ENCODE measurements at regions of chr2 and their contacts with region 1.

Region 1: GRCh38 chr2:215557701-215558100 is 121.8 kb upstream of the FN1 start:
- DNase-seq: no peak
- ATAC-seq: no peak
- H3K4me3 ChIP-seq: no peak overlapping the region
- H3K27ac ChIP-seq: no peak overlapping the region
- H3K4me1 ChIP-seq: peaks cover 13% of the 10 kb centered on the region; the same call in 1 of the 2 replicates
- H3K27me3 ChIP-seq: no peaks in the 10 kb centered on the region
- CTCF ChIP-seq: no peak
- POLR2A ChIP-seq: no peak
- RAD21 ChIP-seq: no peak

Region 2: GRCh38 chr2:215577356-215577755 is 19.7 kb after region 1 on chr2:
- CTCF ChIA-PET with region 1: no interaction called
- POLR2A ChIA-PET with region 1: no interaction called
- dilution Hi-C with region 1: no loop called
- in situ Hi-C with region 1: no loop called
- intact Hi-C with region 1: loop called (anchors 1 kb)
- DNase-seq: peak; percentile 79
- ATAC-seq: peak; percentile 60; the same call in 1 of the 2 replicates
- H3K4me3 ChIP-seq: no peak overlapping the region
- H3K27ac ChIP-seq: no peak overlapping the region
- H3K4me1 ChIP-seq: peaks cover 3% of the 10 kb centered on the region
- H3K27me3 ChIP-seq: no peaks in the 10 kb centered on the region
- CTCF ChIP-seq: no peak
- POLR2A ChIP-seq: no peak
- RAD21 ChIP-seq: no peak

Region 3: DNA sequence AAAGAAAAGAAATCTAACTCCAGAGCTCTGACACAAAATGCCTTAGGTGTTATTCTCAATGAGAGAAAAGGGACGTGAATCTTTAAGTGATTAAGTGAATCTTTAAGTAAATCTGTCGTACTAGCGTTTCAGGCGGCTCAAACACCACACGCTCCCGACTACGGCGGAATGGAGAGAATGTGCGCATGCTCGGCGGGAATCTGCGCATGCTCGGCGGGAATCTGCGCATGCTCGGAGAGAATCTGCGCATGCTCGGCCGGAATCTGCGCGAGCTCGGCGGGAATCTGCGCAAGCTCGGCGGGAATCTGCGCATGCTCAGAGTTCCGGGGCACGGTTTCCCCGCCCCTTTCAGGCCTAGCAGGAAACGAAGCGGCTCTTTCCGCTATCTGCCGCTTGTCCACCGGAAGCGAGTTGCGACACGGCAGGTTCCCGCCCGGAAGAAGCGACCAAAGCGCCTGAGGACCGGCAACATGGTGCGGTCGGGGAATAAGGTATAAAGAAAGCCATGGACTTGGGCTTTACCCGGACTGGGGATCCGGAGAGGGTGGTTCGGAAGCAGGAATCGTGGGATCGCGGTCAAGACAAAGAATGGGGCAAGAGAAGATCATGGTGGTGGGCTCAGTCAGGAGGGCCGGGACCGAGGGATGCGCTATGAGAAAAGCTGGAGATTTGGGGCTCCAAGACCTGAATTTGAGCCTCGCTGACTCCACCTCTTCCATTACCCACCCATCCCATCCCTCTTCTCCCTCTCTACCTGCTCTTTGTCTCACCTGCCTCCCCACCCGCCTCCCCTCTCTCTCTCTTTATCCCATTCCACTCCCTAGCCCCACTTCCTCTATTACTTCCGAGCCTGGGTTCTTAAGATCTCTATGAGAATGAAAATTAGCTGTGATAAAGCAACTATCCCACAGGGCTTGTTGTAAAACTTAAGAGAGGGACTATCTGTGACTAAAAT is 551.5 kb after region 1 on chr2 and contains the start of gene XRCC5:
- CTCF ChIA-PET with region 1: no interaction called
- POLR2A ChIA-PET with region 1: no interaction called
- dilution Hi-C with region 1: no loop called
- in situ Hi-C with region 1: no loop called
- intact Hi-C with region 1: no loop called
- DNase-seq: peak; percentile 96
- ATAC-seq: peak; percentile 86
- H3K4me3 ChIP-seq: peak within 1 kb of the TSS; percentile 71
- H3K27ac ChIP-seq: peak within 1 kb of the TSS; percentile 87
- H3K4me1 ChIP-seq: peaks cover 2% of the 10 kb centered on the region
- H3K27me3 ChIP-seq: no peaks in the 10 kb centered on the region
- CTCF ChIP-seq: no peak
- POLR2A ChIP-seq: peak; percentile 91
- RAD21 ChIP-seq: no peak
- total RNA-seq, gene XRCC5: 352 and 509 TPM in 2 replicates